Activated CD4-positive, alpha-beta T cell treated with anti-CD3 and anti-CD28 coated beads, Interleukin-2, amount 10 ng/mL, durations not matched to agents 24 days and 14 days (primary cell): ENCODE measurements at regions of chr3 and their contacts with region 1.

Region 1: DNA sequence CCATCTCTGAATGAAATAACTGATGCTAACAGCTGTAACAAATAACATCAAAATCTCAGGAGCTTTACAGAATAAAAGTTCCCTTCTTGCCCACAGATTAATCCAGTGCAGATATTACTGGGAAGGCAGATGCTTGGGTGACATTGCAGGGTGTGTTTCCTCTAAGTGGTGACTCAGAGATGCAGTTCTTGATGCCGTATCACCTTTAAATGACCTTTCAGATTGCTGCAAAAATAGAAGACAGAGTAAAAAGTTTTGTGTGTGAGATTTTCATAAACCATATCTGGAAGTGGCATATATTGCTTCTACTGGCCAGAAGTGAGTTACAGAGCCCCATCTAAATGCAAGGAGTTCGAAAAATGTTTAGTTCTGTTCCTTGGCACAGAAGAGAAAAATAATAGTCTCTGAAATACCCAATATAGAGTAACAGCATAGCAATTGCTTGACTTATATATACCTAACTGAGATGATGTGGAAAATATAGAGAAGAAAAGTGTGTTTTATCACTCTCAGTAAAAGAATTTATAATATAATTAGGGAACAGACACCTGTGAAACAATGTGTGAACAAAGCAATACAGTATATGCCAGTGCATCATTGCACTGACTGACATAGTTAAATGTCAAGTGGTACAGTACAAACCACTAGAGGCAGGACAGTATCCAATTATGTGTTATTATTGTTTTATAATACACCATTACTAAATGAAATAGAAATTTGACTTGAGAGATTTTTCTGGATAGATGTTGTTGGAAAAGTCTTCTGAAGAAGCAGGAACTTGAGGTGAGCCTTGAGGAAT is 430.7 kb upstream of the CBLB start:
- DNase-seq: peak; percentile 69
- H3K4me3 Mint-ChIP-seq: peak overlapping the region; percentile 17
- H3K27ac Mint-ChIP-seq: peak overlapping the region; percentile 59
- H3K4me1 Mint-ChIP-seq: peaks cover 42% of the 10 kb centered on the region
- H3K27me3 Mint-ChIP-seq: no peaks in the 10 kb centered on the region

Region 2: DNA sequence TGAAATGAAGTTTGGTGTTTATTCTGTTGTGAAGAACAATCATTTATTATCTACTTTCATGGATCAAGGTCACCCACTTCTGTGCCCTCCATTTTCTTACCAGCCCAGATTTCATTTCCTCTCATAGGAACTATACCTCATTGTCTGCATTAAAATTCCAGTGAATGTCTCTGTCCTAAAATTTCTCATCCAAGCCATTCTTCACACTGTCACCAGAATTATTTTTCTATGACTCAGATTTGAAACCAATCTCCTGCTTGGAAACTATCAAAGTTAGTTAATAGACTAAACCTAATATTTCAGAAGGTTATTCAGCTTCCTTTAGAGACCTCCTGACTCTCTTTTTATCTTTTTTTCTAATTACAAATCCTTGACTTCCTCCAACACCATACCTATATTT is 66.5 kb before region 1 on chr3:
- intact Hi-C with region 1: loop called (anchors 5 kb)
- DNase-seq: no peak
- H3K4me3 Mint-ChIP-seq: no peak overlapping the region
- H3K27ac Mint-ChIP-seq: no peak overlapping the region
- H3K4me1 Mint-ChIP-seq: peaks cover 42% of the 10 kb centered on the region
- H3K27me3 Mint-ChIP-seq: no peaks in the 10 kb centered on the region

Region 3: GRCh38 chr3:106247902-106248684 is 51.4 kb before region 1 on chr3:
- intact Hi-C with region 1: loop called (anchors 2 kb)
- DNase-seq: no peak
- H3K4me3 Mint-ChIP-seq: no peak overlapping the region
- H3K27ac Mint-ChIP-seq: peak overlapping the region; percentile 32
- H3K4me1 Mint-ChIP-seq: peaks cover 16% of the 10 kb centered on the region
- H3K27me3 Mint-ChIP-seq: no peaks in the 10 kb centered on the region

Region 4: DNA sequence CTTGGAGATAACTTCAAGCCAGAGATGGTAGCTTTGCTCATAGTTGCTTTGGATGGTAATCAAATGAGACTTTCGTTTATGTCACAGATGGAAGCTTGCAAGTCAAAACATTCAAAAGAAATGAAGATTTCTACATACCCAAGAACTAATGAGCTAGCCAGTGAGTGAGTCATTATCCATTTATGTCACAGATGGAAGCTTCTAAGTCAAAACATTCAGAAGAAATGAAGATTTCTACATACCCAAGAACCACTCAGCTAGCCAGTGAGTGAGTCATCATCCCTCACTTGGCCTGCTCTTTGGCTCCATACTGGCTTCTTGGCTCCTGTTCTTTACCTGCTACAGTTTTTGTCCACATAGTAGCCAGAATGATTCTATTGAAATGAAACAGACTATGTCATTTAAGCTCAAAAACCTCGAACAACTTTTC is 129.1 kb after region 1 on chr3:
- intact Hi-C with region 1: no loop called
- DNase-seq: no peak
- H3K4me3 Mint-ChIP-seq: peak overlapping the region; percentile 25
- H3K27ac Mint-ChIP-seq: peak overlapping the region; percentile 96
- H3K4me1 Mint-ChIP-seq: peaks cover 42% of the 10 kb centered on the region
- H3K27me3 Mint-ChIP-seq: no peaks in the 10 kb centered on the region